ENCODE measurements at regions of chr2 and their contacts with region 1.

Region 1: DNA sequence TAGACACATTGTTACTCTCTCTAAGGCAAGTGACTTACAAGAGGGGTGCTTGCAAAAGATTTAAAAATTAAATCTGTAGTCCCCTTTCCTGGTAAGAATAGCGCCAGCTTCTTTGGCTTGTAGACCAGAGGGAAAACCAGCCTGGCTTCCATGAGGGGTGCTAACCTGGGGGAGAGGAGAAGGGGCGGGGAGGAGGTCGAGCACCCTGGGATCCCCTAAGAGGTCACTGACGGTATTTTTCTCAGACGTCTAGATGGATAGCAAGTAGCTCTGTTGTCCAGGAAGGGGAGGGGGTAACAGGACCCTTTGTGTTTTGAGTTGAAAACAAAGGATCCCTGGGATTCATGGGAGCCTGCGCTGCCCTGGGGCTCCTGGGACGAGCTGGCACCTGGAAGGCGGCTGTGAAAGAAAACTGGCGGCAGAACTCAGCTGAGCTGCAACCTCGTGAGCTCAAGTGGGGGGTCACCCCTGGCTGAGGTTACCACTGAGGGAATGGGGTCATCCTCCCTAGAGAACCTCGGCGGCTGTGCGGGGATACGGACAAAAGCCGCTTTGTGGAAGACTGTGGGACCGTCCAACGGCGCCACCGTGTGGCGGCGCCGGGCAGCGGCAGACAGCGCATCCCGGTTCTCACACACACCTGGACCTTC is 37.8 kb upstream of the MRPL19 start:
- DNase-seq: peak; percentile 28
- H3K4me3 Mint-ChIP-seq: no peak overlapping the region
- H3K27ac Mint-ChIP-seq: no peak overlapping the region
- H3K4me1 Mint-ChIP-seq: peaks cover 6% of the 10 kb centered on the region
- H3K27me3 Mint-ChIP-seq: peaks cover 41% of the 10 kb centered on the region

Region 2: GRCh38 chr2:75403991-75404428 is 204.8 kb before region 1 on chr2:
- intact Hi-C with region 1: no loop called
- DNase-seq: no peak
- H3K4me3 Mint-ChIP-seq: no peak overlapping the region
- H3K27ac Mint-ChIP-seq: no peak overlapping the region
- H3K4me1 Mint-ChIP-seq: no peaks in the 10 kb centered on the region
- H3K27me3 Mint-ChIP-seq: peaks cover 6% of the 10 kb centered on the region

Region 3: GRCh38 chr2:75560768-75561565 is 47.8 kb before region 1 on chr2 and contains the start of gene EVA1A:
- intact Hi-C with region 1: loop called (anchors 5 kb)
- DNase-seq: no peak
- H3K4me3 Mint-ChIP-seq: peak within 1 kb of the TSS; percentile 81
- H3K27ac Mint-ChIP-seq: no peak within 1 kb of the TSS
- H3K4me1 Mint-ChIP-seq: peaks cover 26% of the 10 kb centered on the region
- H3K27me3 Mint-ChIP-seq: peaks cover 66% of the 10 kb centered on the region
- total RNA-seq, gene EVA1A: not detected in 2 replicates

Region 4: GRCh38 chr2:75646583-75647425 is 38.0 kb after region 1 on chr2 and contains the start of gene MRPL19:
- intact Hi-C with region 1: no loop called
- DNase-seq: peak; percentile 71
- H3K4me3 Mint-ChIP-seq: peak within 1 kb of the TSS; percentile 91
- H3K27ac Mint-ChIP-seq: peak within 1 kb of the TSS; percentile 94
- H3K4me1 Mint-ChIP-seq: peaks cover 14% of the 10 kb centered on the region
- H3K27me3 Mint-ChIP-seq: no peaks in the 10 kb centered on the region
- total RNA-seq, gene MRPL19: 67.7 and 73.5 TPM in 2 replicates

Measured in activated T-helper 2 cell treated with anti-CD3 and anti-CD28 coated beads, Interferon-gamma antibody, Interleukin-2, Interleukin-4, amounts not matched to agents 10 μg/mL and 5 μg/mL and 100 μg/mL, durations not matched to agents 14 hours and 24 hours and 36 hours (primary cell).